Activated CD4-positive, alpha-beta memory T cell treated with anti-CD3 and anti-CD28 coated beads for 36 hours (primary cell): ENCODE measurements at regions of chr15 and their contacts with region 1.

Region 1: GRCh38 chr15:49235446-49236124 is 65.5 kb downstream of the GALK2 start:
- DNase-seq: peak; percentile 57
- H3K4me3 Mint-ChIP-seq: no peak overlapping the region
- H3K27ac Mint-ChIP-seq: no peak overlapping the region
- H3K4me1 Mint-ChIP-seq: peaks cover 9% of the 10 kb centered on the region
- H3K27me3 Mint-ChIP-seq: no peaks in the 10 kb centered on the region

Region 2: GRCh38 chr15:49290191-49290590 is 54.6 kb after region 1 on chr15:
- CTCF ChIA-PET with region 1: no interaction called
- POLR2A ChIA-PET with region 1: no interaction called
- intact Hi-C with region 1: no loop called
- DNase-seq: no peak
- H3K4me3 Mint-ChIP-seq: no peak overlapping the region
- H3K27ac Mint-ChIP-seq: no peak overlapping the region
- H3K4me1 Mint-ChIP-seq: peaks cover 15% of the 10 kb centered on the region
- H3K27me3 Mint-ChIP-seq: no peaks in the 10 kb centered on the region

Region 3: DNA sequence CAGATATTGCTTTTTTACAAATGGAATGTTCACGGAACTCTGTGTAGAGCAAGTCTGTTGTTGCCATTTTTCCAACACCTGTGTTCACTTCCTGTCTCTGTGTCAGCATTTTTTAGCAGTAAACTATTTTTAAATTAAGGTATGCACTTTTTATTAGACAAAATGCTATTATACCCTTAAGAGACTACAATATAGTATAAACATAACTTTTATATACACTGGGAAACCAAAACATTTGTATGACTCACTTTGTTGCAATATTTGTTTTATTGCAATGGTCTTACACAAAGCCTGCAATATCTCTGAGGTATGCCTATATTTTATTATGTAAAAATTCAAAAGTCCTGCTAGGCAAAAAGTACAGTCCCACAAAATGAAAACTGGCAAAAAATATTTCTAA is 147.7 kb after region 1 on chr15:
- CTCF ChIA-PET with region 1: no interaction called
- POLR2A ChIA-PET with region 1: no interaction called
- intact Hi-C with region 1: no loop called
- DNase-seq: no peak
- H3K4me3 Mint-ChIP-seq: no peak overlapping the region
- H3K27ac Mint-ChIP-seq: no peak overlapping the region
- H3K4me1 Mint-ChIP-seq: no peaks in the 10 kb centered on the region
- H3K27me3 Mint-ChIP-seq: peaks cover 2% of the 10 kb centered on the region

Region 4: GRCh38 chr15:49421991-49422390 is 186.4 kb after region 1 on chr15:
- CTCF ChIA-PET with region 1: interaction called, 69 read pairs
- POLR2A ChIA-PET with region 1: no interaction called
- intact Hi-C with region 1: loop called (anchors 1 kb)
- DNase-seq: peak; percentile 27
- H3K4me3 Mint-ChIP-seq: no peak overlapping the region
- H3K27ac Mint-ChIP-seq: peak overlapping the region; percentile 48
- H3K4me1 Mint-ChIP-seq: peaks cover 3% of the 10 kb centered on the region
- H3K27me3 Mint-ChIP-seq: no peaks in the 10 kb centered on the region

Region 5: DNA sequence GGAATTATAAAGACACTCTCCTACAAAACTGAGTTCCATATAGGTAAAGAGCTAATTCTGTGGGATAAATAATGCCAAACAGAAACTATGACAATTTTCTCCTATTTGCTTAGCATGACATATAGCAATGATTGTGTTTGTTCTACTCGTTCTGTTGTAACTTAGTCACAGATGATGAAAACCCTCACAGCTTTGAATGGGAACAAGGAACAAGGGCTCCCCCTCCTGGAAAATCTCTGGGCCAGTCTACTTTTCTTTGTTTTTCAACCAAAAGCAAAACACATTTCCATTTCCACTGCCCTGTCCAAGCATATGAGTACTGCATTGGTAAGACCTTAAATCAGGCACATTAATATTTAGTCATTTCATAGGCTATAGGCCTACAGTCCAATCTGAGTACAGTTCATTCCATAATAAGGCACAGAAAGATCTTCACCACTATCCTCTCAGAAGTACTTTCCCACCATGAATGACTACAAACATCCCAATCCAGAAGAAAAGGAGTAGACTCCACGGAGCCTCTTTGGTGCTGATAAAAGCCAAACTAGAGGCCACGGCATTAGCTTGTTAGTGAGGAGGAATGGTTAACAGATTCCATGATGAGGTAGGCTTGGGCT is 816.3 kb after region 1 on chr15:
- CTCF ChIA-PET with region 1: no interaction called
- POLR2A ChIA-PET with region 1: no interaction called
- intact Hi-C with region 1: loop called (anchors 5 kb)
- DNase-seq: peak; percentile 33
- H3K4me3 Mint-ChIP-seq: no peak overlapping the region
- H3K27ac Mint-ChIP-seq: no peak overlapping the region
- H3K4me1 Mint-ChIP-seq: peaks cover 3% of the 10 kb centered on the region
- H3K27me3 Mint-ChIP-seq: peaks cover 15% of the 10 kb centered on the region